PC-3 (cell line): ENCODE measurements at regions of chr16 and their contacts with region 1.

Region 1: GRCh38 chr16:71883849-71884638 is at the start of gene ZNF821:
- DNase-seq: peak; percentile 70
- ATAC-seq: peak; percentile 50
- H3K4me3 ChIP-seq: peak within 1 kb of the TSS; percentile 88
- H3K27ac ChIP-seq: no peak within 1 kb of the TSS
- H3K4me1 ChIP-seq: peaks cover 5% of the 10 kb centered on the region; the same call in 1 of the 2 replicates
- H3K27me3 ChIP-seq: no peaks in the 10 kb centered on the region
- CTCF ChIP-seq: peak; percentile 28; the same call in 1 of the 2 replicates
- total RNA-seq, gene ZNF821: 4.7 and 5.4 TPM in 2 replicates

Region 2: DNA sequence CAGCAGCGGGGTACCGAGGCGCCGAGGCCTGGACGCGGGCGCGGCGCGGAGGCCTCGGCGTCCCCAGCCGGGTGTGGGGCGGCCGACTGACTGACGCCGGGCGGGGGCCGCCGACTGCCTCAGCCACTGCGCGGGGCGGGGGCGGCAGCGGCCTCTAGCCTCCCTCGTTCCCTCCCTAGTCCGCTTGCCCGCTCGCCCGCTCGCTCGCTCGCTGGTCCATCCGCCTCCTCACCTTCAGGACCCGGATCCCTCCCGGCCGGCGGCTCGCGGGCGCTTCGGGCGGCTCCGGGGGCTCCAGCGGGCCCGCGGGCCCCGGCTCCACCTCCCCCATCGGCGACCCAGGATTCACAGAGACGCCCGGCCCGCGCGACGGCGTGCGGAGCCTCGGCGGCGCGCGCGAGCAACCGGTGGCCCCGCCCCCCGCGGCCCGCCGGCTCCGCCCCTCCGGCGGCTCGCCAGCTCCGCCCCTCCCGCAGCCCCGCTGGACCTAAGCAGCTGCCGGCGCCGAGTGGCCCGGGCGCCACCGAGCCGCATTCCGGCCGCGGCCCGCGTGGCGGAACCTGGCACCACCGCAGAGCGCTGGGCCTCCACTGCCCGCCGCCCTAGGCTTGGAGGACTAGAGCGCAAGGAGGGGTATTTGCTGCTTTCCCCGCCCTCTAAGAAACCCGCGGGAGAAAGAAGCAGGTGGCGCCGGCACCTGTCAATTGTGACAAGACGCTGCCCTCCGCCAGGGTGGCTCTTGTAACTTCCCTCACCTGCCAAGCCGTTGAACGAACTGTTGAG is 160.3 kb before region 1 on chr16:
- CTCF ChIA-PET with region 1: no interaction called
- POLR2A ChIA-PET with region 1: no interaction called
- intact Hi-C with region 1: loop called (anchors 5 kb)
- DNase-seq: peak; percentile 73
- ATAC-seq: peak; percentile 66
- H3K4me3 ChIP-seq: peak overlapping the region; percentile 98
- H3K27ac ChIP-seq: no peak overlapping the region
- H3K4me1 ChIP-seq: 0 out of 2 replicates have a peak, but pooled peaks cover 5% of the 10 kb centered on the region
- H3K27me3 ChIP-seq: no peaks in the 10 kb centered on the region
- CTCF ChIP-seq: no peak

Region 3: DNA sequence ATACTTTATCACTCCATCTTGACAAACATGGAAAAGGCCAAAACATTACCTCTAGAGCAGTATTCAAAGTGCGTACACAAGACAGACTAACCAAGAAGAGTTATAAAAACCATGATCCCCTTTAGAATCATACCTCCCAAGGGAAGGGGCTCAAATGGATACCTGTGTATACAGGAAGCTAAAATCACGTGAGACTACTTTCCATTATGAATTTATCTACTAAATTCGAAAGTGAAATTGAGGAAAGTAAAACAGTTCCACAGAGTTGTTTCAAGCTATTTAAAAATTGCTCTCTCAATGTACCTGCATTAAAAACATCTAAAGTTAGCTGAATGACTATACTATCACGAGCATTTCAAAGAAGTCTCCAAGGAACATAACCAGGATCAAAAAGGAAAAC is 108.1 kb before region 1 on chr16:
- CTCF ChIA-PET with region 1: no interaction called
- POLR2A ChIA-PET with region 1: interaction called, 4 read pairs
- intact Hi-C with region 1: loop called (anchors 10 kb)
- DNase-seq: no peak
- ATAC-seq: no peak
- H3K4me3 ChIP-seq: no peak overlapping the region
- H3K27ac ChIP-seq: no peak overlapping the region
- H3K4me1 ChIP-seq: peaks cover 27% of the 10 kb centered on the region
- H3K27me3 ChIP-seq: no peaks in the 10 kb centered on the region
- CTCF ChIP-seq: no peak

Region 4: DNA sequence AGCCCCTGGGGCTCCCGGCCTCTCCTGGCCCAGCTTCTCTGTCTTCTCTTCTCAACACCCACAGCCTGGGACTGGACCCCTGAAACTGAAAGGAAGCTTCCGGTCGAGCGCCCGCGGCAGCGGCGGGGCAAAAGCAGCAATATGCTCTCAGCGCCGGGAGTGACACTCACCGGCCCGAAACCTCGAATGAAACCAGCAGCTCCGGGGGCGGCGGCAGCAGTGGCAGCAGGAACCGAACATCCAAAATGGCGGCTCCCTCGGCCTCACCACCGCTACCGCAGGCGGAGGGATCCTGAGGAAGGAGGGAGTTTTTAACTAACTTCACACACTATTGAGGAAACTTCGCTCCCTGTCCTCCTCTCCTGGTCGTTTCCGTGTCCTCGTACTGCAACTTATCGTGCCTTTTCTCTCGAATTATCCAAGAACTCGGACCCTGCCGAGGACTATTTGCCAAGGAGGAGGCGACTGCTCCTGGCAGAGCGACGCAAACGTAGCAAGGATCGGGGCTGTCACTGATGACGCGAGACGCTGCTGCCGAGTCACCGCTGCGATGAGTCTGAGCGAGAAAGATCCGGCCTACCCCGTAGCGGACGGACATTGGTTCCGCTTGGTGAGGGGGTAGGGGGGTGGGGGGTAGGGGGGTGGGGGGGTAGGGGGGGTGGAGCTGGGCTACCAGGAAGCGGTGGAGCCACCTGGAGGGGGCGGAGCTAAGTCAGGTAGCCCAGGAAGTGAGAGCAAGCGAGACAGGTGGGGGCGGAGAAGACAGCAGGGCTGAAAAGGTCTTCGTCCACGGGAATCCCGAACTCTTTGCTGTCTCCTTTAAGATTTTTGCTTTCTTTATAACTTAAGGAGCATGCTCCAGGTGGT is 75.2 kb before region 1 on chr16 and contains the start of gene AP1G1:
- CTCF ChIA-PET with region 1: interaction called, 3 read pairs
- POLR2A ChIA-PET with region 1: no interaction called
- intact Hi-C with region 1: loop called (anchors 2 kb)
- DNase-seq: peak; percentile 94
- ATAC-seq: peak; percentile 93
- H3K4me3 ChIP-seq: peak within 1 kb of the TSS; percentile 80
- H3K27ac ChIP-seq: peak within 1 kb of the TSS; percentile 93
- H3K4me1 ChIP-seq: peaks cover 11% of the 10 kb centered on the region
- H3K27me3 ChIP-seq: no peaks in the 10 kb centered on the region
- CTCF ChIP-seq: no peak
- total RNA-seq, gene AP1G1: 51.1 and 51.2 TPM in 2 replicates

Region 5: DNA sequence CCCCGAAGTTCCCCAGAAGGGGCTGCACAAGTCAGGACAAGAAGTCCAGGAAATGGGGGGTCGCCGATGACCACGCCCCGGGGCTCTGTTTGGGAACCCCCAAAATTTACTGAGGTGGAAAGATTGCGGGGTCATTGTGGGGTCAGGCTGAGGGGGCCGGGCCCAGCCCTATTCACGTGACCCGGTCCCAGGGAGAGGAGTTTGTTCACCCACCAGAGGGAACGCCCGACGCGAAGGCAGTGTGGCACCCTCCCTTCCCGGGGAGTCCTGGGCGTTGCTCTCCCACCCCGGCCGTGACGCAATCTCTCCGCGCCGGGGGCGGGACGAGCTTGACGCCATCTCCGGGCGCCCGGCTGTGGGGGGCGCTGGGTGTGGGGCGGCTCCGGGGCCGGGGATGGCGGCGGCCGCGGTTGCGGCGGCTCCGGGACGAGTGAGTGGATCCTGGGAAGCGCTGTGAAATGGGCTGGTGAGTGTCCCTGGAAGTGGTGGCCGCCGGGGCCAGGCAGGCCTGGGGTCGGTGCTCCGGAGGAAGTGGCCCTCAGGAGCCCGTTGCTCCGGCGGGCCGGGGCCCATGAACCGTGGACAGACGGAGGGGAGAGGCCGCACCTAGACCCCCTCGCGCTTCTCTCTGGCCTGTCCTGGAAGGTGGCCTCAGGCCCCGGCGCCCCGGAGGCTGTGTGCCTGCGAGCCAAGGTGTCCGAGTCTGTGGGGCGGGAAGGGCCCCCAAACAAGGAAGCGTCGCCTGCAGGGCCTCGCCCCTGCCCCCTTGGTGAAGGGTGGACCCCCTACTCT is 38.2 kb before region 1 on chr16 and contains the start of gene ATXN1L:
- CTCF ChIA-PET with region 1: interaction called, 3 read pairs
- POLR2A ChIA-PET with region 1: no interaction called
- intact Hi-C with region 1: loop called (anchors 5 kb)
- DNase-seq: peak; percentile 88
- ATAC-seq: peak; percentile 93
- H3K4me3 ChIP-seq: peak within 1 kb of the TSS; percentile 82
- H3K27ac ChIP-seq: peak within 1 kb of the TSS; percentile 41; the same call in 1 of the 2 replicates
- H3K4me1 ChIP-seq: peaks cover 8% of the 10 kb centered on the region; the same call in 1 of the 2 replicates
- H3K27me3 ChIP-seq: no peaks in the 10 kb centered on the region
- CTCF ChIP-seq: no peak
- total RNA-seq, gene ATXN1L: 8.5 and 9.2 TPM in 2 replicates

Region 6: DNA sequence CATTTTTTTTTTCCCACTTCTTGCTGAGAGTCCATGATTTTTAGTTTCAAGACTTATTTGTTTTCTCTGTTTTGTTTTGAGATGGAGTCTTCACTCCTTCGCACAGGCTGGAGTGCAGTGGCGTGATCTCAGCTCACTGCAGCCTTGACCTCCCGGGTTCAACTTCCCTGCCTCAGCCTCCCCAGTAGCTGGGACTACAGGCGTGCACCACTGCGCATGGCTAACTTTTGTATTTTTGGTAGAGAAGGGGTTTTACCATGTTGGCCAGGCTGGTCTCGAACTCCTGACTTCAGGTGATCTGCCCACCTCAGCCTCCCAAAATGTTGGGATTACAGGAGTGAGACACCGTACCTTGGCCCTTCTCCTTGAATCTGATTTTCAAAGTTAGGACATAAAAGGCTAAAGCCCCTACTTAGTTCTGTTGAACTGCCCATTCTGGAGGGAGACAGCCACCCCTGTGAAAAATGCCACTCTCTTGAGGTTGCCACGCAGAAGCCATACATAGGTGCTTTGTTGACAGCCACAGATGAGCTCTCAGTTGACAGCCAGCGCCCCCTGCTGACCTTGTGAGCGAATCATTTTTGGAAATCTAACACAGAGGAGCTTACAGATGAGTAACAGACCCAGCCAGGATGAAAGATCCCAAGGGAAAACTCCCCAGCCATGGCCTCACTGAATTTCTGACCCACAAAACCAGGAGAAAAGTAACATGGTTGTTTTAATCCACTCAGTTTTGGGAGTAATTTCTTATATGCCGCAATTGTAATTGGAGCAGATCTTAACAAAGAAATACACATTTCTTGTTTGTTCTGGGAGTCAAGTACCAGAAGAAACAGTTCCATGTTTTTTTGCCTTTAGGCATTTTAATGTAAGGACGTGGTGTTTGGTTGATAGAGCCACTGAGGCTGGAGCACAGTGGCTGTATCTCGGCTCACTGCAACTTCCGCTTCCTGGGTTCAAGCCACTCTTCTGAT is 77.3 kb after region 1 on chr16:
- CTCF ChIA-PET with region 1: interaction called, 10 read pairs
- POLR2A ChIA-PET with region 1: no interaction called
- intact Hi-C with region 1: loop called (anchors 5 kb)
- DNase-seq: peak; percentile 82
- ATAC-seq: peak; percentile 96
- H3K4me3 ChIP-seq: no peak overlapping the region
- H3K27ac ChIP-seq: no peak overlapping the region
- H3K4me1 ChIP-seq: no peaks in the 10 kb centered on the region
- H3K27me3 ChIP-seq: no peaks in the 10 kb centered on the region
- CTCF ChIP-seq: peak; percentile 80